ENCODE measurements at regions of chr1 and their contacts with region 1.

Region 1: GRCh38 chr1:115469703-115470476 is 131.8 kb upstream of the NGF start:
- DNase-seq: no peak
- H3K4me3 ChIP-seq: no peak overlapping the region
- H3K27ac ChIP-seq: no peak overlapping the region
- H3K4me1 ChIP-seq: no peaks in the 10 kb centered on the region
- H3K27me3 ChIP-seq: no peaks in the 10 kb centered on the region
- CTCF ChIP-seq: peak; percentile 85 to 93

Region 2: GRCh38 chr1:115595279-115596079 is 125.6 kb after region 1 on chr1:
- intact Hi-C with region 1: loop called (anchors 10 kb)
- DNase-seq: peak; percentile 84 to 91
- H3K4me3 ChIP-seq: no peak overlapping the region
- H3K27ac ChIP-seq: no peak overlapping the region
- H3K4me1 ChIP-seq: peaks cover 0 to 6% (median 2%) of the 10 kb centered on the region in 4 donors
- H3K27me3 ChIP-seq: no peaks in the 10 kb centered on the region
- CTCF ChIP-seq: peak; percentile 88 to 95

Measured in tibial artery (tissue), 4 donors.